OCI-LY7 (cell line): ENCODE measurements at regions of chr19 and their contacts with region 1.

Region 1: DNA sequence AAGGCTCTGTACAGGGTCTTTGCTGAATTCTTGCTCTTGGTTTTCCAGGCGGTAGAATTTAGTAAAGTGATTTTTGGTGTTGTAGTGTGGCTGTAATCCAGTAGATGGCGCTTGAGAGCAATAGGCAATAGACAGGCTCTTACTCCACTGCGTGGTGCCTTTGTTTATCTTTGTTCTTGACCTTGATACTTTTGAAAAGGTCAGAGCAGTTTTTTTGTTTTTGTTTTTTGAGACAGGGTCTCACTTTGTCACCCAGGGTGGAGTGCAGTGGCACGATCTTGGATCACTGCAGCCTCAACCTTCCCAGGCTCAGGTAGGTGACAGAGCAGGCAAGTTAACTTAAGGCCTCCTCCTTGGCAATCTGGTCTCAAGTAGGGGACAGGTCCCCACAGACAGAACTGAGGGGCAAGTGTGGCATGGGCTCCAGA is 12.2 kb upstream of the LILRA5 start:
- DNase-seq: peak; percentile 69
- H3K4me3 ChIP-seq: no peak overlapping the region
- H3K27ac ChIP-seq: no peak overlapping the region
- H3K4me1 ChIP-seq: peaks cover 6% of the 10 kb centered on the region
- CTCF ChIP-seq: peak; percentile 100

Region 2: DNA sequence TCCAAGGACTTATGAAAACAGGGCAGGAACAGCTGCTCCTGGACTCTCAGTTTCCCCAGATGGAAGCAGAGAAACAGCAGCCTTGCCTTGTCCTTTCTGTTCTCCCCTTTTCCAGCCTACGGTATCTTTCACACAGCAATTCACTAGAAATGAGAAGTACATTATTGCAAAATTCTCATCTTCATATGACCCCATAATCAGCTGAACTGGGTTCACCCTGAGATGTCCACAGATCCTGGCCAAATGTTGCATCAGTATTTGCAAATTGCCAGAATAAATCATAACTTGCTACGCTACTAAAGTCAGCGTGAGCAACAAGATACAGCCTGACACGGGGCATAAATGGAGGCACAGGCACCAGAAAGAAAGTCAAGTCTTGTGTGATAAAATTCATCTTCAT is 277.6 kb before region 1 on chr19:
- CTCF ChIA-PET with region 1: no interaction called
- POLR2A ChIA-PET with region 1: no interaction called
- intact Hi-C with region 1: no loop called
- DNase-seq: no peak
- H3K4me3 ChIP-seq: no peak overlapping the region
- H3K27ac ChIP-seq: no peak overlapping the region
- H3K4me1 ChIP-seq: no peaks in the 10 kb centered on the region
- CTCF ChIP-seq: no peak

Region 3: GRCh38 chr19:54354761-54355160 is 29.6 kb after region 1 on chr19:
- CTCF ChIA-PET with region 1: interaction called, 3 read pairs
- POLR2A ChIA-PET with region 1: no interaction called
- intact Hi-C with region 1: loop called (anchors 1 kb)
- DNase-seq: no peak
- H3K4me3 ChIP-seq: no peak overlapping the region
- H3K27ac ChIP-seq: no peak overlapping the region
- H3K4me1 ChIP-seq: peaks cover 19% of the 10 kb centered on the region
- CTCF ChIP-seq: no peak

Region 4: DNA sequence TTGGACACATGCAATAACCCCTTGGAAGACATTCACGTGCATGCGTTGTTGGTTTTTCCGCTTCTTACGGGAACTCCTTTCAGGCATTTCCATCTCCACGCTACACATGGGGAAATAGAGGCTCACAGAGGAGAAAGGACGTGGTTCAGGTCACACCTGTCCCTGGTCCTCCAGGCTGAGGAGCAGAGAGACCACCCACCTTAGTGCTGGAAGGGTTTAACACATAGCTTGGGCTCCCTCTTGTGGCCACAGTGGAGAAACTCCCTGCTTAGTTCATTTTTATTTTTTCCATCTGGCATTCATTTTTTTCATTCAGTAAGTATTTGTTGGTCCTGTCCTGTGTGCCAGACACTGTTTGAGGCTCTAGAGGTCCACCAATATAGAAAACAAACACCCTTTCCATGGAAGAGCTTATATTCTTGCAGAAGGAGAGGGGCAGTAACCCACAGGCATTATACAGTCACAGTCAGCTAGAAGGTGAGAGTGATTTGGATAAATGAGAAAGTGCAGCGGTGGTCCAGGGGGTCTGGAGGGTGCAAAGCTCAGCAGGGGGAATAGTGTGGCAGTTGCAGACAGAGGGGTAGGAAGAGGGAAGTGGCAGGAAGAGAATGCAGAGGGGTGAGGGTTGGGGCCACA is 65.9 kb after region 1 on chr19:
- CTCF ChIA-PET with region 1: no interaction called
- POLR2A ChIA-PET with region 1: no interaction called
- intact Hi-C with region 1: loop called (anchors 1 kb)
- DNase-seq: peak; percentile 82
- H3K4me3 ChIP-seq: no peak overlapping the region
- H3K27ac ChIP-seq: no peak overlapping the region
- H3K4me1 ChIP-seq: peaks cover 33% of the 10 kb centered on the region
- CTCF ChIP-seq: peak; percentile 92